Endothelial cell of umbilical vein (primary cell): ENCODE measurements at regions of chr7 and their contacts with region 1.

Region 1: DNA sequence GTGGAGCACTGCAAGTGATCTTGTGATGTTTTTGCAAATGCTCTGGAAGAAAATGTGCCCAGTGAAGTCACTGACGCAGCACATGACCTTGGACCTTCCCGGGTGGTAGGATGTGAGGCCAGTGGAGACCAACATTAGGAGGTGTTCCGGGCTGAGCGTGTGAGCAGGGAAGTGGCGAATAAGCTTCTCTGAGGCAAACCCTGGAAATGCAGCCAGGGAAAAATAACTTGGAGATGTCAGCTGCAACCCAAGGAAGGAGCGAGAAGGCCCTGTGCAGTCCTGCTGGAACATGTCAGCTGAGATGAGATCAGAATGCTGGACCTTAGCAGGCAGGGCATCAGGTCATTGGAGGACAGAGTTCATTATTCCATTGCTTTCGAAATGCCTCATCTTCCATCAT is 18.6 kb upstream of the SDK1 start:
- DNase-seq: no peak
- H3K4me3 ChIP-seq: no peak overlapping the region
- H3K27ac ChIP-seq: no peak overlapping the region
- H3K4me1 ChIP-seq: no peaks in the 10 kb centered on the region
- H3K27me3 ChIP-seq: no peaks in the 10 kb centered on the region
- CTCF ChIP-seq: no peak
- POLR2A ChIP-seq: no peak

Region 2: DNA sequence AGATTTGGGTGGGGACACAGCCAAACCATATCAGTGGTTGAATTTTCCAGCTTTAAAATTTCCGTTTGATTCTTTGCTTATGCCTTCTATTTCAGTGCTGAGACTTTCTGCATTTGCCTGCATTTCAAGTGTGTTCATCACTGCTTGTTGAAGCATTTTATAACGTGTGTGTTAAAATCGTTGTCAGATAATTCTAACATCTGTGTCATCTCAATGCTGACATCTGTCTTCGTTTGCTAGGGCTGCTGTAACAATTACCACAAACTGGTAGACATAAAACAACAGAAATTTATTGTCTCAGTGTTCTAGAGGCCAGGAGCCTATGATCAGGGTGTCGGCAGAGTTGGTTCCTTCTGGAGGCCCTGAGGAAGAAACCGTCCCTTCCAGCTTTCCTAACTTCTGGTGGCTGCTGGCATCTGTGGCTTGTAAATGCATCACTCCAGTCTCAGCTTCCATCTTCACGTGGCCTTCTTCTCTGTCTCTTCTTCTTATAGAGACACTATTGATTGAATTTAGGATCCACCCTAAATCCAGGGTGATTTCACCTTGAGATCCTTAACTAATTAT is 52.5 kb before region 1 on chr7:
- CTCF ChIA-PET with region 1: no interaction called
- POLR2A ChIA-PET with region 1: no interaction called
- dilution Hi-C with region 1: no loop called
- intact Hi-C with region 1: loop called (anchors 10 kb)
- DNase-seq: no peak
- H3K4me3 ChIP-seq: no peak overlapping the region
- H3K27ac ChIP-seq: no peak overlapping the region
- H3K4me1 ChIP-seq: no peaks in the 10 kb centered on the region
- H3K27me3 ChIP-seq: peaks cover 0 to 3% of the 10 kb centered on the region in 2 experiments
- CTCF ChIP-seq: no peak
- POLR2A ChIP-seq: no peak

Region 3: DNA sequence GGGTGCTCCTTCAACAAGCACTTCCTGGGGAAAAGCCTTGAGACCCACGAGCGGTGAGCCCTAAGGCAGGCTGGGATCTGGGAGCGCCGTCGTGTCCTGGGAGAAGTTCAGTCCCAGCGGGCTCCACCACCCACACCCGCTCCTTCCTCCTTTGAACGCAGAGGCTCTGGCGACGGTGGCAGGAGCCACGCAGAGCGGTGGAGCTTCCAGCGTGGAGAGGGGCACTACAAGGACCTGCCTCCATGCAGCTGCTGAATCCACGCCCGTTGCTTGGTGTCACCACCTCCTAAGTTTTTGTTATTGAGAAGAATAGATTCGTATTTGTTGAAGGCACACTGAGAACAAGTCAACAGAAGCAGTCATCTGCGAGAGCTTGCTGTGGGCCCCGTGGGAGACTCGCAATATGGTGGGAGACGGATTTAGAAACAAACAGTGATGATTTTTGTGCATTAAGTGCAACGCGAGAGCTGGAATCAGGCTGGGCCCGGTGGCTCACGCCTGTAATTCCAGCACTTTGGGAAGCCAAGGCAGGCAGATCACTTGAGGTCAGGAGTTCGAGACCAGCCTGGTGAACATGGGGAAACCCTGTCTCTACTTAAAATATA is 41.5 kb before region 1 on chr7:
- CTCF ChIA-PET with region 1: no interaction called
- POLR2A ChIA-PET with region 1: no interaction called
- dilution Hi-C with region 1: no loop called
- intact Hi-C with region 1: loop called (anchors 2 kb)
- DNase-seq: no peak
- H3K4me3 ChIP-seq: no peak overlapping the region
- H3K27ac ChIP-seq: no peak overlapping the region
- H3K4me1 ChIP-seq: peaks cover 9% of the 10 kb centered on the region
- H3K27me3 ChIP-seq: no peaks in the 10 kb centered on the region
- CTCF ChIP-seq: no peak
- POLR2A ChIP-seq: no peak